GM12878 (cell line): ENCODE measurements at regions of chr2 and their contacts with region 1.

Region 1: GRCh38 chr2:236352761-236353593 is 88.8 kb upstream of the ASB18 start:
- DNase-seq: no peak
- ATAC-seq: peak; percentile 58
- H3K4me3 ChIP-seq: no peak overlapping the region
- H3K27ac ChIP-seq: no peak overlapping the region
- H3K4me1 ChIP-seq: no peaks in the 10 kb centered on the region
- H3K27me3 ChIP-seq: no peaks in the 10 kb centered on the region
- CTCF ChIP-seq: peak; percentile 63 to 80 (median 75); a peak in 5 of 6 replicates
- EP300 ChIP-seq: no peak
- POLR2A ChIP-seq: no peak
- RAD21 ChIP-seq: peak; percentile 84

Region 2: GRCh38 chr2:236168110-236169067 is 184.6 kb before region 1 on chr2 and contains the start of gene GBX2:
- CTCF ChIA-PET with region 1: no interaction called
- POLR2A ChIA-PET with region 1: no interaction called
- RAD21 ChIA-PET with region 1: no interaction called
- SMC1A ChIA-PET with region 1: no interaction called
- in situ Hi-C with region 1: no loop called
- intact Hi-C with region 1: no loop called
- DNase-seq: no peak
- ATAC-seq: no peak
- H3K4me3 ChIP-seq: no peak within 1 kb of the TSS
- H3K27ac ChIP-seq: no peak within 1 kb of the TSS
- H3K4me1 ChIP-seq: no peaks in the 10 kb centered on the region
- H3K27me3 ChIP-seq: peaks cover 4 to 13% of the 10 kb centered on the region in 2 experiments
- CTCF ChIP-seq: no peak
- EP300 ChIP-seq: no peak
- POLR2A ChIP-seq: no peak
- RAD21 ChIP-seq: no peak
- polyA plus RNA-seq, gene GBX2: not detected

Region 3: DNA sequence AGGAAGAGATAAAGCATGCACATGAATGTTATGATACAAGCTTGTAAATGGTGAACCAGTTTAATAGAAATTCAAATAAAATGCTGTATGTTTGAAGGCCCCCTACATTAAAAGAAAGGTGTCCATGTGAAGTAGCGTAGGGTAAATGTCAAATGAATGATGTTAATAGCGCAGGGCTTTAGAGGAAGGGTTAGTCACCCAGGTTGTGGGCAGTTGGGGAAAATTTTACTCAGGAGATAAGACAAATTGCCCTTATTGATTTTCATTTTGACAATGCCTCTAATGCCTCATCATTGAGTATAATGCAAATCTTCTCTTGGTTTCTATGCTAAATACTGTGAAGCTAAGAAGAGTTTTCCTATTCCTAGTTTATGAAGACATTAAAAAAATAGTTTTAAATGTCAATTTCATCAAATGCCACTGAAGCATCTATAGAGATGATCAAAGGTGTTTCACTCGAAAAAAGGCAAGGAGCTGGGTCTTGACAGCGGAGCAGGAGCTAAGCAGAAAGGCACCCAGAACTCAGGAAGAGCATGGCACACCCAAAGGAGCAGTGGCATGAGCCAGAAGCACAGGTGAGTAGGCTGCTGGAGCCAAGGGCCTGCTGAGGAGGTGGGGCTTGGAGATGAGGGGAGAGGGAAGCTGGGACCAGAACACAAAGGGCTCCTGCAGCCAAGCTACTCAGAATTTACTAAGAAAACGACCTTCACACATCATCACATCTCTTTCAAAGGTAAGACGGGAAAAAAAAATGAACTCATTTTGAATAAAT is 87.3 kb after region 1 on chr2:
- CTCF ChIA-PET with region 1: no interaction called
- POLR2A ChIA-PET with region 1: no interaction called
- RAD21 ChIA-PET with region 1: no interaction called
- SMC1A ChIA-PET with region 1: no interaction called
- in situ Hi-C with region 1: no loop called
- intact Hi-C with region 1: no loop called
- DNase-seq: no peak
- ATAC-seq: no peak
- H3K4me3 ChIP-seq: no peak overlapping the region
- H3K27ac ChIP-seq: no peak overlapping the region
- H3K4me1 ChIP-seq: no peaks in the 10 kb centered on the region
- H3K27me3 ChIP-seq: no peaks in the 10 kb centered on the region; a peak in 1 of 4 replicates
- CTCF ChIP-seq: no peak
- EP300 ChIP-seq: no peak
- POLR2A ChIP-seq: no peak
- RAD21 ChIP-seq: no peak

Region 4: GRCh38 chr2:236485519-236485918 is 132.5 kb after region 1 on chr2:
- CTCF ChIA-PET with region 1: no interaction called
- POLR2A ChIA-PET with region 1: no interaction called
- RAD21 ChIA-PET with region 1: no interaction called
- SMC1A ChIA-PET with region 1: no interaction called
- in situ Hi-C with region 1: no loop called
- intact Hi-C with region 1: no loop called
- DNase-seq: no peak
- ATAC-seq: no peak
- H3K4me3 ChIP-seq: no peak overlapping the region
- H3K27ac ChIP-seq: no peak overlapping the region
- H3K4me1 ChIP-seq: no peaks in the 10 kb centered on the region
- H3K27me3 ChIP-seq: peaks cover 0 to 2% of the 10 kb centered on the region in 2 experiments; a peak in 1 of 4 replicates
- CTCF ChIP-seq: no peak
- EP300 ChIP-seq: no peak
- POLR2A ChIP-seq: no peak
- RAD21 ChIP-seq: no peak

Region 5: DNA sequence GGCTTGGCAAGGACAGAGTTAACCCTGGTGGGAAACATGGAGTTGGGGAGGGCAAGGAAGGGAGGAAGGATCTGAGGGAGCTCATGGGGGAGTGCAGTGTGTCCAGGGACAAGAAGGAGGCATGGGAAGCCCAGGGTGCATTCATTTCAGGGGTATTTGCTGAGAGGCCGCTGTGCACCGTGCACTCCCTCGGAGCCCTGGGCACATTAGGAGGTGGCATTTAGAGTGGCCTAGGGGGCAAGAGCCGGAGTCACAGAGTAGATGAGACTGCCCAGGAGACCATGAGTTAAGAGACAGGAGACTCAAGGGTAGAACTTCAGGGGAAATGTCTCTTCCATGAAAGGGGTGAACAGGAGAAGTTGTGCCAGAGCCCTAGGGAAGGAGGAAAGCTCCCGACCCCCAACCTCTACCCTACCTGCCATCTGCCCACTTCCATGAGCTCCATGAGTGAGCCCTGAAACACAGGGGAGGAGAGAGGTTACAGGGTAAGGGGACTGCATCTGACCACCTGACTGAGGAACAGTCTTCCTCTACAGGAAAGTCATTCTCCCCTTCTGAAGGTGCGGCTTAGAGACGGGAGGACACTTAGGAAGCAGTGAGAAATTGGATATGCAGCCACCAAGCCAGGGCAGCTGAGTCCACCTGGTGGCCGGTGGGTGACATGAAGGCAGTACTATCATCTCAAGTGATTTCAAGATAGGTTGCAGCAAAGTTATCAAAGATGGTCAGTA is 674.2 kb after region 1 on chr2:
- CTCF ChIA-PET with region 1: interaction called, 10 read pairs
- POLR2A ChIA-PET with region 1: no interaction called
- RAD21 ChIA-PET with region 1: interaction called, 4 read pairs
- SMC1A ChIA-PET with region 1: interaction called, 8 read pairs
- in situ Hi-C with region 1: no loop called
- intact Hi-C with region 1: loop called (anchors 1 kb)
- DNase-seq: no peak
- ATAC-seq: peak; percentile 88
- H3K4me3 ChIP-seq: no peak overlapping the region
- H3K27ac ChIP-seq: no peak overlapping the region
- H3K4me1 ChIP-seq: no peaks in the 10 kb centered on the region
- H3K27me3 ChIP-seq: no peaks in the 10 kb centered on the region
- CTCF ChIP-seq: peak; percentile 65 to 71 (median 70)
- EP300 ChIP-seq: no peak
- POLR2A ChIP-seq: no peak
- RAD21 ChIP-seq: peak; percentile 87